CD8-positive, alpha-beta T cell (primary cell): ENCODE measurements at regions of chr5 and their contacts with region 1.

Region 1: GRCh38 chr5:62167561-62168070 is 138.4 kb upstream of the KIF2A start:
- DNase-seq: no peak
- ATAC-seq: no peak
- H3K4me3 ChIP-seq: no peak overlapping the region
- H3K4me3 Mint-ChIP-seq: no peak overlapping the region
- H3K27ac ChIP-seq: no peak overlapping the region
- H3K27ac Mint-ChIP-seq: no peak overlapping the region
- H3K4me1 ChIP-seq: no peaks in the 10 kb centered on the region
- H3K4me1 Mint-ChIP-seq: no peaks in the 10 kb centered on the region
- H3K27me3 ChIP-seq: no peaks in the 10 kb centered on the region
- H3K27me3 Mint-ChIP-seq: peaks cover 20% of the 10 kb centered on the region
- CTCF ChIP-seq: no peak

Region 2: DNA sequence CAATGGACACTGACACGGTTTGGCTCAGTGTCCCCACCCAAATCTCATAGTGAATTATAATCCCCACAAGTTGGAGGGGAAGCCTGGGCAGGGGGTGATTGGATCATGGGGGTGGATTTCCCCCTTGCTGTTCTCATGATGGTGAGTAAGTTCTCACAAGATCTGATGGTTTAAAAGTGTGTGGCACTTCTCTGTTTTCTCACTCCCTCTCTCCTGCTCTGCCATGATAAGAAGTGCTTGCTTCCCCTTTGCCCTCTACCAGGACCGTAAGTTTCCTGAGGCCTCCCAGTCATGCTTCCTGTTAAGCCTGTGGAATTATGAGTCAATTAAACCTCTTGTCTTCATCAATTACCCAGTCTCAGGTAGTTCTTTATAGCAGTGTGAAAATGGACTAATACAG is 22.6 kb after region 1 on chr5:
- CTCF ChIA-PET with region 1: no interaction called
- POLR2A ChIA-PET with region 1: no interaction called
- intact Hi-C with region 1: loop called in 1 of 2 experiments (anchors 1 kb)
- DNase-seq: no peak
- ATAC-seq: no peak
- H3K4me3 ChIP-seq: no peak overlapping the region
- H3K4me3 Mint-ChIP-seq: no peak overlapping the region
- H3K27ac ChIP-seq: no peak overlapping the region
- H3K27ac Mint-ChIP-seq: no peak overlapping the region
- H3K4me1 ChIP-seq: no peaks in the 10 kb centered on the region
- H3K4me1 Mint-ChIP-seq: no peaks in the 10 kb centered on the region
- H3K27me3 ChIP-seq: peaks cover 0 to 3% of the 10 kb centered on the region in 2 experiments
- H3K27me3 Mint-ChIP-seq: peaks cover 12% of the 10 kb centered on the region
- CTCF ChIP-seq: no peak